CD8-positive, alpha-beta T cell (primary cell): ENCODE measurements at regions of chr7 and their contacts with region 1.

Region 1: GRCh38 chr7:100673300-100673941 is at the start of gene GNB2:
- DNase-seq: peak; percentile 90 to 98 (median 96)
- ATAC-seq: peak; percentile 53
- H3K4me3 ChIP-seq: peak within 1 kb of the TSS; percentile 89 to 99
- H3K4me3 Mint-ChIP-seq: peak within 1 kb of the TSS; percentile 91
- H3K27ac ChIP-seq: peak within 1 kb of the TSS; percentile 80 to 98
- H3K27ac Mint-ChIP-seq: peak within 1 kb of the TSS; percentile 93
- H3K4me1 ChIP-seq: peaks cover 13% of the 10 kb centered on the region
- H3K4me1 Mint-ChIP-seq: peaks cover 23% of the 10 kb centered on the region
- H3K27me3 ChIP-seq: no peaks in the 10 kb centered on the region
- H3K27me3 Mint-ChIP-seq: no peaks in the 10 kb centered on the region
- CTCF ChIP-seq: no peak
- total RNA-seq, gene GNB2: 69.4 to 69.6 TPM

Region 2: GRCh38 chr7:100101016-100101862 is 572.2 kb before region 1 on chr7 and contains the starts of genes AP4M1 and MCM7:
- CTCF ChIA-PET with region 1: no interaction called
- POLR2A ChIA-PET with region 1: no interaction called
- intact Hi-C with region 1: loop called (anchors 5 kb)
- DNase-seq: peak; percentile 88 to 98 (median 96)
- ATAC-seq: peak; percentile 83
- H3K4me3 ChIP-seq: peak within 1 kb of the TSS; percentile 91 to 98
- H3K4me3 Mint-ChIP-seq: peak within 1 kb of the TSS; percentile 95
- H3K27ac ChIP-seq: peak within 1 kb of the TSS; percentile 80 to 89
- H3K27ac Mint-ChIP-seq: peak within 1 kb of the TSS; percentile 97
- H3K4me1 ChIP-seq: peaks cover 27% of the 10 kb centered on the region
- H3K4me1 Mint-ChIP-seq: peaks cover 41% of the 10 kb centered on the region
- H3K27me3 ChIP-seq: no peaks in the 10 kb centered on the region
- H3K27me3 Mint-ChIP-seq: no peaks in the 10 kb centered on the region
- CTCF ChIP-seq: no peak
- total RNA-seq, gene AP4M1: 2.8 to 3.9 TPM
- total RNA-seq, gene MCM7: 63.7 to 64.6 TPM

Region 3: GRCh38 chr7:100478966-100479665 is 194.3 kb before region 1 on chr7 and contains the start of gene TSC22D4:
- CTCF ChIA-PET with region 1: no interaction called
- POLR2A ChIA-PET with region 1: no interaction called
- intact Hi-C with region 1: loop called (anchors 1 to 5 kb)
- DNase-seq: peak; percentile 85 to 97 (median 94)
- ATAC-seq: peak; percentile 69
- H3K4me3 ChIP-seq: peak within 1 kb of the TSS; percentile 82 to 96
- H3K4me3 Mint-ChIP-seq: peak within 1 kb of the TSS; percentile 93
- H3K27ac ChIP-seq: peak within 1 kb of the TSS; percentile 72 to 75
- H3K27ac Mint-ChIP-seq: peak within 1 kb of the TSS; percentile 89
- H3K4me1 ChIP-seq: peaks cover 54% of the 10 kb centered on the region
- H3K4me1 Mint-ChIP-seq: peaks cover 44% of the 10 kb centered on the region
- H3K27me3 ChIP-seq: no peaks in the 10 kb centered on the region
- H3K27me3 Mint-ChIP-seq: no peaks in the 10 kb centered on the region
- CTCF ChIP-seq: no peak
- total RNA-seq, gene TSC22D4: 30.7 to 32.3 TPM

Region 4: DNA sequence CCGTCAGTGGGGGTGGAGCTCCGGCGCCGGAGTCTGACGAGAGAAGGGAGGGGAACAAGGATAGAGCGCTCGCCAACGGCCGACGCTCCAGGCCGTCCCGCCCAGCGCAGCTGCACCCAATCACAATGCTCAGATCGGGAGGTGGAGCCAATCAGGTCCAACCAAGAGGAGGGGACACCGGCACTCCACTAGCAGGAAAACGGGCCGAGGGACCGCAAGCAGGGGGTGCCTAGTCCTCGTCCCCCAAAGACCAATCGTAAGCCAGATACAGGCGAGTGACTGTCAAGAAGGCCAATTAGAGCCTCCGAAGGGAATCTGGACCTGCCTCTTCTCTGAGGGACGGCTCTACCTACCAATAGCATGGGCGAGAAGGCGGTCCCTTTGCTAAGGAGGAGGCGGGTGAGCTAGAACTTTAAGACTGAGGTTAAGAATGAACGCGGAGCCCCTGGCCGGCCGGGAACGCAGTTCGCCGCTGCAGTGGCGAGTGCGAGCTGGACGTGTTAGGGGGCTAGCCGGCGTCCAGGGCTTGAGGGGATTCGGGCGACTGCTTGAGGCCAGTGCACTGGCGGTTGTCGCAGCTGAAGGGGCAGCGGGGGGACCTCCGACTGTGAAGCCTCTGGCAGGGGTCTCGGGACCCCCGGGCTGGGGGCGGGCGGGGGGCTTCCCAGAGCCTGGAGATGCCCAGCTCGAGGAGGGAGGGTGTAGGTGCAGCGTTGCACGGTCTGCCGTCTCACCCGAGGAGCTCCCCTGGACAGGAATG is 87.0 kb before region 1 on chr7 and contains the start of gene FBXO24:
- CTCF ChIA-PET with region 1: no interaction called
- POLR2A ChIA-PET with region 1: interaction called, 11 read pairs
- intact Hi-C with region 1: loop called (anchors 1 kb)
- DNase-seq: peak; percentile 98 to 100 (median 99)
- ATAC-seq: peak; percentile 80
- H3K4me3 ChIP-seq: peak within 1 kb of the TSS; percentile 93 to 96
- H3K4me3 Mint-ChIP-seq: peak within 1 kb of the TSS; percentile 96
- H3K27ac ChIP-seq: peak within 1 kb of the TSS; percentile 74 to 94
- H3K27ac Mint-ChIP-seq: peak within 1 kb of the TSS; percentile 57
- H3K4me1 ChIP-seq: peaks cover 22% of the 10 kb centered on the region
- H3K4me1 Mint-ChIP-seq: peaks cover 39% of the 10 kb centered on the region
- H3K27me3 ChIP-seq: no peaks in the 10 kb centered on the region
- H3K27me3 Mint-ChIP-seq: peaks cover 3% of the 10 kb centered on the region
- CTCF ChIP-seq: no peak
- total RNA-seq, gene FBXO24: 0.30 to 0.53 TPM

Region 5: GRCh38 chr7:100611974-100612729 is 61.3 kb before region 1 on chr7 and contains the start of gene MOSPD3:
- CTCF ChIA-PET with region 1: no interaction called
- POLR2A ChIA-PET with region 1: interaction called, 5 read pairs
- intact Hi-C with region 1: loop called (anchors 1 kb)
- DNase-seq: peak; percentile 96 to 100 (median 98)
- ATAC-seq: peak; percentile 89
- H3K4me3 ChIP-seq: peak within 1 kb of the TSS; percentile 68 to 96
- H3K4me3 Mint-ChIP-seq: peak within 1 kb of the TSS; percentile 99
- H3K27ac ChIP-seq: peak within 1 kb of the TSS; percentile 93 to 98
- H3K27ac Mint-ChIP-seq: peak within 1 kb of the TSS; percentile 100
- H3K4me1 ChIP-seq: peaks cover 19% of the 10 kb centered on the region
- H3K4me1 Mint-ChIP-seq: peaks cover 24% of the 10 kb centered on the region
- H3K27me3 ChIP-seq: no peaks in the 10 kb centered on the region
- H3K27me3 Mint-ChIP-seq: no peaks in the 10 kb centered on the region
- CTCF ChIP-seq: no peak
- total RNA-seq, gene MOSPD3: 10.3 to 10.5 TPM

Region 6: DNA sequence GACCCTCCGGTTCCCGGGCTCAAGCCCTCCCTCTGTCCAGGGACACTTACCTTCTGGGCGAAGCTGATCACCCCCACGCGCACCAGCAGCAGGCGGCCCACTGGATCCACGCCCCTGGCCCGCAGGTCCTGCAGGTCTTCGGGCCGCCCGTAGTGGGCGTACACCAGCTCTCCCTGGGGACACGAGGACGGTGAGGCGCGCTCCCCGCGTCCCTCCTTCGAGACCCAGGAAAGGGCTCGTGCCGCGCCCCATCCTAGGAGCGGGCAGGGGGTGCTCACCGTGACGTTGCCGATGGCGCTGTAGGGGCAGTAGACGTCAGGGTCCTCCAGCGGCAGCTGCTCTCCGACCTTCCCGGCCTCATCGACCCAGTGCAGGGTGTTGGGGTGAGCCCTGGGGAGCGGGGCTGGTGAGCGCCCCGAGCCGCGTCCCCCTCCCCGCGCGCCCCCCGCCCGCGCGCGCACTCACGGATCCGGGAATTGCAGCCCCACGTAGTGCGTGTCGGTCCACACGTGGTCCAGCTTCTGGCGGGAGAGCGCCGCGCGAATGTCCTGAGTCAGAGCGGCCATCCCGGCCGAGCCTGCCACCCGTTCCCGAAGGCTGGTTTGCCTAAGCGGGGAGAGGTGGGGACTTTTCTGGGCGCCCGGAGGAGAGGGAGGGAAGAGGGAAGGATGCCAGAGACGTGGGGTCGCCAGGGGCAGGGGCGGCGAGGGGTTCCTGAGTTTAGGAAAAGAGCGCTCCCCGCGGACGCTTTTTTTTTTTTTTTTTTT is 40.3 kb before region 1 on chr7:
- CTCF ChIA-PET with region 1: interaction called, 3 read pairs
- POLR2A ChIA-PET with region 1: interaction called, 4 read pairs
- intact Hi-C with region 1: loop called in 1 of 2 experiments (anchors 1 kb)
- DNase-seq: peak in 7 of 9 experiments; percentile 34 to 81 (median 60)
- ATAC-seq: peak; percentile 77
- H3K4me3 ChIP-seq: peak overlapping the region; percentile 69 to 82
- H3K4me3 Mint-ChIP-seq: peak overlapping the region; percentile 77
- H3K27ac ChIP-seq: peak overlapping the region in 1 of 2 experiments; percentile 50
- H3K27ac Mint-ChIP-seq: no peak overlapping the region
- H3K4me1 ChIP-seq: peaks cover 8% of the 10 kb centered on the region
- H3K4me1 Mint-ChIP-seq: peaks cover 21% of the 10 kb centered on the region
- H3K27me3 ChIP-seq: no peaks in the 10 kb centered on the region
- H3K27me3 Mint-ChIP-seq: no peaks in the 10 kb centered on the region
- CTCF ChIP-seq: peak; percentile 36

Region 7: GRCh38 chr7:100691676-100692577 is 18.5 kb after region 1 on chr7:
- CTCF ChIA-PET with region 1: interaction called, 126 read pairs
- POLR2A ChIA-PET with region 1: interaction called, 7 read pairs
- intact Hi-C with region 1: loop called in 1 of 2 experiments (anchors 1 kb)
- DNase-seq: peak; percentile 63 to 88 (median 82)
- ATAC-seq: peak; percentile 71
- H3K4me3 ChIP-seq: peak overlapping the region in 1 of 2 experiments; percentile 72
- H3K4me3 Mint-ChIP-seq: peak overlapping the region; percentile 94
- H3K27ac ChIP-seq: no peak overlapping the region
- H3K27ac Mint-ChIP-seq: peak overlapping the region; percentile 90
- H3K4me1 ChIP-seq: peaks cover 53% of the 10 kb centered on the region
- H3K4me1 Mint-ChIP-seq: peaks cover 42% of the 10 kb centered on the region
- H3K27me3 ChIP-seq: no peaks in the 10 kb centered on the region
- H3K27me3 Mint-ChIP-seq: no peaks in the 10 kb centered on the region
- CTCF ChIP-seq: peak; percentile 83

Region 8: DNA sequence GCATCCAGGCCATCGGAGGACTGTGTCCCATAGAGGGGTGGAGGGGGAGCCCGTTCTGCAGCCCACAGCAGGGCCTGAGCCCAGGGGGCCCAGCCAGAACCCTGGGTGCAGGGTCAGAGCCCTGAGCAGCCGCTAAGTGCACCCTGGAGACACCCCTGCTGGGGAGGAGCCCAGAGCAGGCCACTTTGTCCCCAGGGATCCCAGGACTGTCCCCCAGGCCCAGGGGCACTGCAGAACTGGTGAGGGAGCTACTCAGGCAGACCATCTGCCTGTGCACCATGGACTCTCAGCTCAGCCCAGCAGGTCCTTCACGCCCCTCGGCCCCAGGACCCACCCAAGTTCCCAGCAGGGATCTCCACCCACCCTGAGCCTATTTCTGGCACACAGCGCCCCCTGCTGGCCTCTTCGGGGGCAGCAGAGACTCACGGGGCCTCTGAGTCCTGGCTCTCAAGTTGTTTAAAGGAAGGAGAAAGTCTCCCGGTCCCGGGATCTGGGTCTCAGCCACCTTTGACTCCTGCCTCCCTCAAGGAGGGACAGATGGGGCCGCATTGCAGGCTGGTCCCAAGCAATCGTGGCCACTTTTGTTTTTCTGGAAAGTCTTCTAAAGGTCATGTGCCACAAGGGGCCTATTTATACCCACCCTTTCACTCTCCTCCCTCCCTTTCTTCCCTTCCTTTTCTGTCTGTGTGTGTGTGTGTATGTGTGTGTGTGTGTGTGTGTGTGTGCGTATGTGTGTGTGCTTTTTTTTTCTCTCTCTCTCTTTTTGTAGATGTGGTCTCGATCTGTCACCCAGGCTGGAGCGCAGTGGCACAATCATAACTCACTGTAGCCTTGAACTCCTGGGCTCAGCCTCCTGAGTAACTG is 865.4 kb after region 1 on chr7:
- CTCF ChIA-PET with region 1: no interaction called
- POLR2A ChIA-PET with region 1: no interaction called
- intact Hi-C with region 1: no loop called
- DNase-seq: peak; percentile 26 to 74 (median 52)
- ATAC-seq: peak; percentile 55
- H3K4me3 ChIP-seq: no peak overlapping the region
- H3K4me3 Mint-ChIP-seq: no peak overlapping the region
- H3K27ac ChIP-seq: no peak overlapping the region
- H3K27ac Mint-ChIP-seq: no peak overlapping the region
- H3K4me1 ChIP-seq: no peaks in the 10 kb centered on the region
- H3K4me1 Mint-ChIP-seq: peaks cover 6% of the 10 kb centered on the region
- H3K27me3 ChIP-seq: no peaks in the 10 kb centered on the region
- H3K27me3 Mint-ChIP-seq: no peaks in the 10 kb centered on the region
- CTCF ChIP-seq: peak; percentile 79